ENCODE measurements at regions of chr22 and their contacts with region 1.

Region 1: DNA sequence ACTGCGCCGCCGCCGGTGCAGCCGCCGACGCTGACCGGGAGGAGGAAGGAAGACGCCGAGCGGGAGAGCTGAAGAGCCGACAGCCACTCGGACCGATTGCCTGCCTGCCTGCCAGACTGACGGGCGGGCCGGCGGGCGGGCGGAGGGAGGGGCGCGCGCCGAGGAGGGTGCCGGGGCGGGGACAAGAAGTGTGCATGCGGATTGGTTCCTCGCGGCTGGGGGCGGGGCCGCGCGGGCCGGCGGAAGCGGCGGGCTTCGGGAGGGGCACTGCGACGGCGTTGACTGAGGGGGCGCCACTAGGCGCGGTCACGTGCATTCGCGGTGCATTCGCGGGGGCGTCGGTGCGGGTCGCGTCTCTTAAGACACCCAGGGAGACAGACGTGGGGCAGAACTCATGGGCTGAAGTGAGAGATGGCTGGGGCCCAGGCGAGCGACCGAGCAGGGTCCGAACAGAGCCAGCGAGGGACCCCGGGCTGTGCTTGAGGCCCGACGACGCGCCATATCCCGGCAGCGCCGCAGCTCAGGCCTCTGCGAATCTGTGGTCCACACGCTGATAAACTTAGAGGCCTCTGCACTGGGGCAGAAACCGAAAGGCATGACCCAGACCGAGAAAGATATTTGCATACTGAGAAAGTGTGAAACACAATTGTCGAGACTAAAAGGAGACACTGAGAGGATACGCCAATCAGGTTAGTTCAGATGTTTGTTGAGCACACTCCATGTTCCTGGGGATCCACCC is at the start of gene MAPK1:
- DNase-seq: peak; percentile 87 to 97 (median 94)
- ATAC-seq: peak; percentile 96
- H3K4me3 ChIP-seq: peak within 1 kb of the TSS; percentile 92 to 93
- H3K4me3 Mint-ChIP-seq: peak within 1 kb of the TSS; percentile 97
- H3K27ac ChIP-seq: peak within 1 kb of the TSS; percentile 86 to 96
- H3K27ac Mint-ChIP-seq: peak within 1 kb of the TSS; percentile 97
- H3K4me1 ChIP-seq: peaks cover 38% of the 10 kb centered on the region
- H3K4me1 Mint-ChIP-seq: peaks cover 51% of the 10 kb centered on the region
- H3K27me3 ChIP-seq: no peaks in the 10 kb centered on the region
- H3K27me3 Mint-ChIP-seq: no peaks in the 10 kb centered on the region
- CTCF ChIP-seq: peak; percentile 47
- total RNA-seq, gene MAPK1: 34.0 to 39.2 TPM

Region 2: DNA sequence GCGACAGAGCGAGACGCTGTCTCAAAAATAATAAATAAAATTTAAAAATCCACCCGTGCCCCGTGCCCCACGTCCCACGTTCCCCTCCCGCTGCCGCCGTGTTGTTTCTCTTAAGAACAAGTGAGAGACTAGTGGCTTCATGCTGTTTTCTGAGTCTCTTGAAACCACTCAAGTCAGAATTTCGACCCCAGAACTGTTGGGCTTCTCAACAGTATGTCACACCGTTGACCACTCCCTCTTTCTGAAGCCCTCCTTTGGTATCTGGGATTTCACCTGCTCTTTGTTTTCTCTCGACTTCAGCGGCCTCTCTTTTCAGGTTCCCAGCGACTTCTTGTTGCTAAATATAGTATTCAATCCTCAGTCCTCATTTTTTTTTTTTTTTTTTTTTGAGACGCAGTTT is 200.9 kb before region 1 on chr22:
- CTCF ChIA-PET with region 1: no interaction called
- POLR2A ChIA-PET with region 1: no interaction called
- intact Hi-C with region 1: loop called (anchors 2 to 5 kb)
- DNase-seq: no peak
- ATAC-seq: no peak
- H3K4me3 ChIP-seq: peak overlapping the region; percentile 93 to 98
- H3K4me3 Mint-ChIP-seq: peak overlapping the region; percentile 99
- H3K27ac ChIP-seq: peak overlapping the region in 1 of 2 experiments; percentile 89
- H3K27ac Mint-ChIP-seq: peak overlapping the region; percentile 97
- H3K4me1 ChIP-seq: peaks cover 15% of the 10 kb centered on the region
- H3K4me1 Mint-ChIP-seq: peaks cover 32% of the 10 kb centered on the region
- H3K27me3 ChIP-seq: no peaks in the 10 kb centered on the region
- H3K27me3 Mint-ChIP-seq: no peaks in the 10 kb centered on the region
- CTCF ChIP-seq: no peak

Region 3: GRCh38 chr22:21766691-21767462 is 100.8 kb before region 1 on chr22:
- CTCF ChIA-PET with region 1: interaction called, 3 read pairs
- POLR2A ChIA-PET with region 1: interaction called, 4 read pairs
- intact Hi-C with region 1: loop called (anchors 2 kb)
- DNase-seq: peak; percentile 28 to 94 (median 62)
- ATAC-seq: peak; percentile 72
- H3K4me3 ChIP-seq: peak overlapping the region in 1 of 2 experiments; percentile 22
- H3K4me3 Mint-ChIP-seq: peak overlapping the region; percentile 55
- H3K27ac ChIP-seq: peak overlapping the region; percentile 41 to 76
- H3K27ac Mint-ChIP-seq: peak overlapping the region; percentile 93
- H3K4me1 ChIP-seq: peaks cover 57% of the 10 kb centered on the region
- H3K4me1 Mint-ChIP-seq: peaks cover 65% of the 10 kb centered on the region
- H3K27me3 ChIP-seq: no peaks in the 10 kb centered on the region
- H3K27me3 Mint-ChIP-seq: no peaks in the 10 kb centered on the region
- CTCF ChIP-seq: no peak

Region 4: GRCh38 chr22:21837248-21837979 is 30.3 kb before region 1 on chr22:
- CTCF ChIA-PET with region 1: interaction called, 3 read pairs
- POLR2A ChIA-PET with region 1: no interaction called
- intact Hi-C with region 1: loop called in 1 of 2 experiments (anchors 5 kb)
- DNase-seq: no peak
- ATAC-seq: no peak
- H3K4me3 ChIP-seq: no peak overlapping the region
- H3K4me3 Mint-ChIP-seq: no peak overlapping the region
- H3K27ac ChIP-seq: no peak overlapping the region
- H3K27ac Mint-ChIP-seq: peak overlapping the region; percentile 29
- H3K4me1 ChIP-seq: peaks cover 15% of the 10 kb centered on the region
- H3K4me1 Mint-ChIP-seq: peaks cover 57% of the 10 kb centered on the region
- H3K27me3 ChIP-seq: no peaks in the 10 kb centered on the region
- H3K27me3 Mint-ChIP-seq: no peaks in the 10 kb centered on the region
- CTCF ChIP-seq: no peak

Region 5: DNA sequence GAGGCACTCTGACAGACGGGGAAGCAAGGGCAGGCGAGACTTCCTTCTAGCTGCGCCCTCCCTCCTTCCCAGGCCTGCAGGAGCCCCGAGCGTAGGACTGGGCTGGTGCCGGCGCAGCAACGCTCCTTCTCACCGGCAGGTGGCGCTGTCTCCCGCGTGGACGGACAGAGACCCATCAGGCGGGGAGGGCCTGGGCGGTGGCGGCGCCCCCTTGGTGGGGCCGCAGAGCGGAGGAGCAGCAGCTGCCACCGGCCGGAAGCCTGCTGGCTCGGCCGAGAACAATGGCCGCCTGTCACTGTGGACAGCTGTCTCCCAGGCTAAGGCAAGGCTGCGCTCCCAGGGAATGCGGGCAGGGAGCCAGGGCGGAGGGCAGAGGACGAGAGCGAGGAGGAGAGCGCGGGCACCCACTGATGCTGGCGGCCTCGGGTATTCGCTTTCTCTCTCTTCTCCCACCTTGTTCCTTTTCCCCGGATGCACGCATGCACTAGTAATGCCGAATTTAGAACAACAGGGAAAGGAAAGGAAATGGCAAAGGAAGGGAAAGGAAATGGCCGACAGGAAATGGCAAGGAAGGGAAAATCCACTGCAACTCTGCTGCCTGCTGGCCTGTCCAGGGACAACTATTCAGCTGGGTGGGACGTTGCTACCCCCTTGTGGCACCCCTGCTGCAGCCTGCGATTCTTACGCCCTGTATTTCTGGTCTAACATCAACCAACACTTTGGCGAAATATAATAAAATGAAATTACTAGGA is 70.5 kb after region 1 on chr22:
- CTCF ChIA-PET with region 1: interaction called, 4 read pairs
- POLR2A ChIA-PET with region 1: no interaction called
- intact Hi-C with region 1: loop called in 1 of 2 experiments (anchors 2 kb)
- DNase-seq: peak; percentile 81 to 95 (median 91)
- ATAC-seq: peak; percentile 98
- H3K4me3 ChIP-seq: peak overlapping the region; percentile 52 to 76
- H3K4me3 Mint-ChIP-seq: peak overlapping the region; percentile 83
- H3K27ac ChIP-seq: peak overlapping the region; percentile 43 to 86
- H3K27ac Mint-ChIP-seq: peak overlapping the region; percentile 74
- H3K4me1 ChIP-seq: peaks cover 23% of the 10 kb centered on the region
- H3K4me1 Mint-ChIP-seq: peaks cover 36% of the 10 kb centered on the region
- H3K27me3 ChIP-seq: no peaks in the 10 kb centered on the region
- H3K27me3 Mint-ChIP-seq: no peaks in the 10 kb centered on the region
- CTCF ChIP-seq: peak; percentile 96

Measured in CD8-positive, alpha-beta T cell (primary cell).